ENCODE measurements at regions of chr10 and their contacts with region 1.

Region 1: GRCh38 chr10:60114765-60115586 is 208.6 kb upstream of the CCDC6 start:
- DNase-seq: peak; percentile 96
- ATAC-seq: peak; percentile 92
- H3K4me3 ChIP-seq: no peak overlapping the region
- H3K27ac ChIP-seq: no peak overlapping the region
- H3K4me1 ChIP-seq: peaks cover 7% of the 10 kb centered on the region
- H3K27me3 ChIP-seq: no peaks in the 10 kb centered on the region
- CTCF ChIP-seq: peak; percentile 99

Region 2: DNA sequence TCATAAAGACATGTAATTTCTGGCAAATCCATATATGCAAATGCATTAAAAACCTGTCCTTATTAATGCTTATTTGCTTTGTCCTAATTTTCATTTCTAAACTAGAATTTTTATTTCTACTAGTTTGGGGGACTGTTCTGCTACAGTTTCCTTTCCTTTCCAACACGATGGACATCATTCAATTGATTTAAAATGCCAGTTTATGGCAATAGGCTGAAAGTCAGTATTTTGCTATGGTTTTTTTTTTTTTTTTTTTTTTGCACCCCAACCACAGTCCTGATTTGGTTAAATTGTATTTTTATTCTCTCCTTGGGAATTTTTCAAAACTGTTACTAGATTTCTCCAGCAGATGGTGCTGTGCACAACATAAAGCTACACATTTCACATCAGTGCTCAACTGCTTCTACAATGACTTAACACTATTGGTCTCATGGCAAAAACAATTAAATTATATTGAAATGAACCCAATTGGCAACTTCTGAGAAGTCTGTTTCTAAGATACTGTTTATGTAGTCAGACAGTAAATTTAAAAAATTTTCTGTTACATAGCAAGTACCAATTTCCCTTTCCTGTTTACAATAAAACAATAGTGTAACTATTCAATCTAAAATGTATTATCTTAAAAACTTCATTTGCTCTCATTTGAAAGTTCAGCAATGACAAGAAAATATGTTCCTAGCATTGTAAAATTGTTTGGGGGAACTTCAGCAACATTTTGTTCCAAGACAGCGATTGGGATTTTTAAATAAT is 14.8 kb before region 1 on chr10:
- CTCF ChIA-PET with region 1: interaction called, 4 read pairs
- POLR2A ChIA-PET with region 1: no interaction called
- intact Hi-C with region 1: loop called (anchors 1 kb)
- DNase-seq: peak; percentile 88
- ATAC-seq: peak; percentile 61
- H3K4me3 ChIP-seq: no peak overlapping the region
- H3K27ac ChIP-seq: no peak overlapping the region
- H3K4me1 ChIP-seq: peaks cover 14% of the 10 kb centered on the region
- H3K27me3 ChIP-seq: no peaks in the 10 kb centered on the region
- CTCF ChIP-seq: peak; percentile 92

Region 3: DNA sequence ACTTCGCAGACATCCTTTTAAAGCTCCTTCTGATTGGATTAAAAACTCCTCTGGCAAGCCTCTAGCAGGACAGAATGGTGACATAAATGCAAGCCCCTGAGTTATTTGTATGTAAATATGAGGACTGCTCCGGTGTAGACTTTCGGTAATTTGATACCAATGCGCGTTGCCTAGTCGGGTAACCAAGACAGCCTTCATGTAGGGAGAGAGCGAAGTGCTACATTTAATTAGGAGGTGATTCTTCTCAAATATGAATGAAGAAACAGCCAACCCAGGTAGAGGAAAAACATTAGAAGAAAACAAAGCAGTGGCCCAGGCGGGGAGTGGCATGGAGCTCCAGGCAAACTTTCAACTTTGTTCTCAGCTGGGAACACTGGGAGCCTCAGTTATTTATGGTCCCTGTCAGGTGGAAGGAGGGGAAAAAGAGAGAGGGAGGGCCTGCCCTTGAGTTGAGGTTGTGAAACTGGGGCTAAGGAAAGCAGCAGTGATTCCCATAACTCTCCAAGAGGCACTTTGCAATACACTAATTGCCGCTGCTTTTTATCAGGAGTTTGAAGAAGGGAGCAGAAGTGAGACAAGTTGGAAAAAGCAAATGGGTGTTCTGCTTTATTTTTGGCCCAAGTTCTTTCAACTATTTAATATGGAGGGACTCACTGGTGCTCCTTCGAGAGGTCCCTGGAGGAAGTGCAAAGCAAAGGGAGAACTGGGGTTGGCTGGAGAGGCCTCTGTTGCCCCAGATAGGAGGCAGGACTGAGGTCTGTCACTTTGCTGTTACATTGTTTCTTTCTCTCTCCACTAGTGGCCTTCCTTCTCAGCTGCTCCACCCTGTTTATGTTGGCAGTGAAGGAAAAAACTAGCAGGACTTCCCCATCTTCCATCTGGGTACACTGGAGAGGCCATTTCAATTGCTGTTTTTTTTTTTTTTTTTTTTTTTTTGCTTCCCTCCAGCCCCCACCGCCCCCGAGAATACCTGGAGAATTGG is 26.0 kb after region 1 on chr10:
- CTCF ChIA-PET with region 1: interaction called, 12 read pairs
- POLR2A ChIA-PET with region 1: interaction called, 5 read pairs
- intact Hi-C with region 1: loop called (anchors 1 kb)
- DNase-seq: peak; percentile 81
- ATAC-seq: peak; percentile 81
- H3K4me3 ChIP-seq: peak overlapping the region; percentile 59
- H3K27ac ChIP-seq: peak overlapping the region; percentile 88
- H3K4me1 ChIP-seq: peaks cover 70% of the 10 kb centered on the region
- H3K27me3 ChIP-seq: no peaks in the 10 kb centered on the region
- CTCF ChIP-seq: 0 out of 2 replicates have a peak, but pooled peaks have one; percentile 7

Region 4: GRCh38 chr10:60170250-60170649 is 55.3 kb after region 1 on chr10:
- CTCF ChIA-PET with region 1: interaction called, 11 read pairs
- POLR2A ChIA-PET with region 1: interaction called, 5 read pairs
- intact Hi-C with region 1: loop called (anchors 1 kb)
- DNase-seq: peak; percentile 97
- ATAC-seq: peak; percentile 72
- H3K4me3 ChIP-seq: peak overlapping the region; percentile 55
- H3K27ac ChIP-seq: peak overlapping the region; percentile 95
- H3K4me1 ChIP-seq: peaks cover 71% of the 10 kb centered on the region
- H3K27me3 ChIP-seq: no peaks in the 10 kb centered on the region
- CTCF ChIP-seq: no peak

Region 5: GRCh38 chr10:60222047-60222446 is 107.1 kb after region 1 on chr10:
- CTCF ChIA-PET with region 1: interaction called, 3 read pairs
- POLR2A ChIA-PET with region 1: interaction called, 11 read pairs
- intact Hi-C with region 1: no loop called
- DNase-seq: no peak
- ATAC-seq: no peak
- H3K4me3 ChIP-seq: no peak overlapping the region
- H3K27ac ChIP-seq: no peak overlapping the region
- H3K4me1 ChIP-seq: no peaks in the 10 kb centered on the region
- H3K27me3 ChIP-seq: no peaks in the 10 kb centered on the region
- CTCF ChIP-seq: no peak

Measured in PC-3 (cell line).